ENCODE measurements at regions of chr13 and their contacts with region 1.

Region 1: GRCh38 chr13:112873851-112874750 is 94.9 kb upstream of the MCF2L start:
- DNase-seq: peak; percentile 28 to 86
- H3K4me3 ChIP-seq: no peak overlapping the region
- H3K4me1 ChIP-seq: no peaks in the 10 kb centered on the region
- H3K27me3 ChIP-seq: no peaks in the 10 kb centered on the region

Region 2: GRCh38 chr13:112643759-112644459 is 230.2 kb before region 1 on chr13:
- in situ Hi-C with region 1: loop called (anchors 10 kb)
- DNase-seq: no peak
- H3K4me3 ChIP-seq: no peak overlapping the region
- H3K4me1 ChIP-seq: no peaks in the 10 kb centered on the region
- H3K27me3 ChIP-seq: 0 out of 2 replicates have a peak, but pooled peaks cover 2% of the 10 kb centered on the region

Measured in HAP-1 (cell line).